CD4-positive, alpha-beta memory T cell (primary cell): ENCODE measurements at regions of chr1 and their contacts with region 1.

Region 1: GRCh38 chr1:203320591-203321272 is 15.4 kb downstream of the BTG2 start:
- DNase-seq: peak; percentile 83 to 90 (median 87)
- H3K4me3 ChIP-seq: peak overlapping the region in 1 of 2 donors; percentile 27
- H3K4me3 Mint-ChIP-seq: peak overlapping the region; percentile 61 to 93 (median 83)
- H3K27ac ChIP-seq: peak overlapping the region; percentile 70
- H3K27ac Mint-ChIP-seq: peak overlapping the region; percentile 91 to 99 (median 98)
- H3K4me1 ChIP-seq: peaks cover 94% of the 10 kb centered on the region
- H3K4me1 Mint-ChIP-seq: peaks cover 72 to 93% (median 84%) of the 10 kb centered on the region in 4 donors
- H3K27me3 ChIP-seq: no peaks in the 10 kb centered on the region
- H3K27me3 Mint-ChIP-seq: no peaks in the 10 kb centered on the region

Region 2: GRCh38 chr1:203290261-203291089 is 30.3 kb before region 1 on chr1:
- CTCF ChIA-PET with region 1: interaction called, 78 read pairs
- POLR2A ChIA-PET with region 1: interaction called, 877 read pairs
- intact Hi-C with region 1: no loop called
- DNase-seq: peak; percentile 96 to 98 (median 97)
- H3K4me3 ChIP-seq: peak overlapping the region; percentile 11 to 65
- H3K4me3 Mint-ChIP-seq: peak overlapping the region; percentile 75 to 89 (median 84)
- H3K27ac ChIP-seq: peak overlapping the region; percentile 97
- H3K27ac Mint-ChIP-seq: peak overlapping the region; percentile 98 to 100 (median 100)
- H3K4me1 ChIP-seq: peaks cover 61% of the 10 kb centered on the region
- H3K4me1 Mint-ChIP-seq: peaks cover 48 to 69% (median 58%) of the 10 kb centered on the region in 4 donors
- H3K27me3 ChIP-seq: no peaks in the 10 kb centered on the region
- H3K27me3 Mint-ChIP-seq: no peaks in the 10 kb centered on the region

Region 3: DNA sequence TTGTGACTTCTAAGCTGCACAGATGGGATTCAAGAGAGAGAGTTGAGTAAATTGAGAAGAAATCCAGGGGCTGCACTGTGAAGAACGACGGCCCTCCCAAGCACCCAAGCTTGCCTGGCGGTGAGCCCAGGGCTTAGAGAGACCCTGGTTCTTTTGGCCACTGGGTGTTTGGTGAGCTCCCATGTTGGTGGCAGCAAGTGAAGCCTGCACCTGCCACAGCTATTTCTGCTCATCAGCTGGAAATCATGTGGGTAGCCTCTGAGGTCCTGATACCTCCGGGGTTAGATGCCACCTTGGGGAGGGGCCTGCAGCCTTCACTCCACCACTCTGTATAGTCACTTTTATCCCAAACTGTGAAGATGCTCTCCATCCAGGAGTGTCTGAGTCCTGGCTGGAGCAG is 21.6 kb before region 1 on chr1:
- CTCF ChIA-PET with region 1: interaction called, 78 read pairs
- POLR2A ChIA-PET with region 1: interaction called, 26 read pairs
- intact Hi-C with region 1: no loop called
- DNase-seq: no peak
- H3K4me3 ChIP-seq: no peak overlapping the region
- H3K4me3 Mint-ChIP-seq: no peak overlapping the region
- H3K27ac ChIP-seq: no peak overlapping the region
- H3K27ac Mint-ChIP-seq: peak overlapping the region in 1 of 7 donors; percentile 21
- H3K4me1 ChIP-seq: peaks cover 14% of the 10 kb centered on the region
- H3K4me1 Mint-ChIP-seq: peaks cover 17 to 38% (median 29%) of the 10 kb centered on the region in 4 donors
- H3K27me3 ChIP-seq: no peaks in the 10 kb centered on the region
- H3K27me3 Mint-ChIP-seq: no peaks in the 10 kb centered on the region

Region 4: GRCh38 chr1:203304919-203305808 is 15.6 kb before region 1 on chr1 and contains the start of gene BTG2:
- CTCF ChIA-PET with region 1: interaction called, 271 read pairs
- POLR2A ChIA-PET with region 1: interaction called, 1,407 read pairs
- intact Hi-C with region 1: loop called (anchors 1 kb)
- DNase-seq: peak; percentile 90 to 94 (median 91)
- H3K4me3 ChIP-seq: peak within 1 kb of the TSS; percentile 87 to 95
- H3K4me3 Mint-ChIP-seq: peak within 1 kb of the TSS; percentile 90 to 99 (median 98)
- H3K27ac ChIP-seq: peak within 1 kb of the TSS; percentile 100
- H3K27ac Mint-ChIP-seq: peak within 1 kb of the TSS; percentile 97 to 100 (median 99)
- H3K4me1 ChIP-seq: peaks cover 50% of the 10 kb centered on the region
- H3K4me1 Mint-ChIP-seq: peaks cover 48 to 82% (median 57%) of the 10 kb centered on the region in 4 donors
- H3K27me3 ChIP-seq: no peaks in the 10 kb centered on the region
- H3K27me3 Mint-ChIP-seq: no peaks in the 10 kb centered on the region
- total RNA-seq, gene BTG2: 197 to 201 TPM